ENCODE measurements at regions of chr10 and their contacts with region 1.

Region 1: GRCh38 chr10:31808258-31809218 is 120.1 kb downstream of the ARHGAP12 start:
- DNase-seq: peak in 1 of 2 donors; percentile 89
- H3K4me3 ChIP-seq: peak overlapping the region; percentile 29 to 34
- H3K27ac ChIP-seq: peak overlapping the region; percentile 82
- H3K4me1 ChIP-seq: no peaks in the 10 kb centered on the region
- H3K27me3 ChIP-seq: no peaks in the 10 kb centered on the region
- CTCF ChIP-seq: peak in 2 of 3 experiments; percentile 39 to 73
- POLR2A ChIP-seq: no peak

Region 2: GRCh38 chr10:30722956-30723620 is 1085.5 kb before region 1 on chr10:
- intact Hi-C with region 1: loop called (anchors 10 kb)
- DNase-seq: no peak
- H3K4me3 ChIP-seq: no peak overlapping the region
- H3K27ac ChIP-seq: no peak overlapping the region
- H3K4me1 ChIP-seq: no peaks in the 10 kb centered on the region
- H3K27me3 ChIP-seq: no peaks in the 10 kb centered on the region
- CTCF ChIP-seq: no peak
- POLR2A ChIP-seq: no peak

Region 3: DNA sequence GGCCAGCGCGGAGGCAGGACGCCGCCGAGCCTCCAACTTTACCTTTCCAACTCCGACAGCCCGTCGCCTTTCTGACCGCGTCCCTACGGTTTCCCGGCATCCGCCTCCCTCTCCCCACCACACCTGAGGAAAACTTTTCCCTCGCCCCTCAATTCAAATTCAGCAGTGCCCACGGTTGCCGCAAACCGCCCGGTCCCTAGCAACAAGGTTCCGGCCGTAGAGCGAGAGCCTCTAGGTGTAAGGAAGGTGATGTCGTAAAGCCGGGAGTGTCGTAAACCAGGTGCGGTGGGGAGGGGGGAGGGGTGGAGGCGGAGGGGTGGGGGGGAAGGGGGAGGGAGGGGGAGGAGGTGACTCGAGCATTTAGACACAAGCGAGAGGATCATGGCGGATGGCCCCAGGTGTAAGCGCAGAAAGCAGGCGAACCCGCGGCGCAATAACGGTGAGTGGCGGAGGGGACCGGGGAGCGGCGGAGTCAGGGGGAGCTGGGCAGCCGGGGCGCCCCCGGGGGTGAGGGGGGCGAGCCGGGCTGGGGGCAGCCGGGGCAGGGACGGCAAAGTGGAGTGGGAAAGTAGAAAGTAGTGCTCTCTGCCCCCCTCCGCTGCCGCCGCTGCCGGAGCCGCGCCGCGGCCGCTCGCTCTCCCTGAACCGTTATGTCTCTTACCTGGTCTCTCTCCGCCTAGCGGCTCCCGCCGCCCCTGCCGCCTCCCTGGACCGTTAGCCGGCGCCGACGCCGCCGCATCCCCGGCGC is 489.5 kb before region 1 on chr10 and contains the start of gene ZEB1:
- intact Hi-C with region 1: loop called (anchors 5 kb)
- DNase-seq: peak in 1 of 2 donors; percentile 94
- H3K4me3 ChIP-seq: peak within 1 kb of the TSS; percentile 89 to 92
- H3K27ac ChIP-seq: peak within 1 kb of the TSS; percentile 99
- H3K4me1 ChIP-seq: peaks cover 3% of the 10 kb centered on the region
- H3K27me3 ChIP-seq: no peaks in the 10 kb centered on the region
- CTCF ChIP-seq: peak in 2 of 3 experiments; percentile 36 to 42
- POLR2A ChIP-seq: peak in 1 of 2 donors; percentile 40
- total RNA-seq, gene ZEB1: 82.7 TPM